Cardiac septum (tissue), 1 donor: ENCODE measurements at regions of chr16 and their contacts with region 1.

Region 1: DNA sequence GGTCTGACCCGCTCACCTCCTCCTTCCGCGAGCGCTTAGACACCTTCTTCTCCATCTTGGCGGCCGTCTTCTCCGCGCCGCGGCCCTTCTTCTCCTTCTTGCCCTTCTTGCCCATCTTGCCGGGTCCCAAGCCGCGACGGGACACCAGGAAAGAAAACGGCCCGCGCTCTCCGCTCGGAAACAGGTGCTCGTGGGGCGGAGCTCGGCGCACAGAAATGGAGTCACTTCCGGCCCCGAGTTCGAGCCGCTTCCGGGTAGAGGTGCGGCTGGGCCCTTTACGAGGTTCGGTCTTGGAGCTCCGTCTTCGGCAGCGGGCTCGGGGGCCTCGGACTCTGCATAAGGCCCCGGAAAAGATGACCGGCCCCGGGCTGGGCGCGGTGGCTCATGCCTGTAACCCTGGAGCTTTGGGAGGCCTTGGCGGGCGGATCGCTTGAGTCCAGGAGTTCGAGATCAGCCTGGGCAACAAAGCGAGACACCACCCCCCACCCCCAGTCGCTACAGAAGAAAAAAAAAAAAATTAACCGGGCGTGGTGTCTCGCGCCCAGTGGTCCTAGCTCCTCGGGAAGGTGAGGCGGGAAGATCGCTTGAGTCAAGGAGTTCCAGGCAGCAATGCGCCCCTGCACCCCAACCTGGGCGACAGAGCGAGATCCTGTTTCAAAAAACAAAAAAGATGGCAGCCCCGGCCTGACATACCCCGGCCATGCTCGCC is at the start of gene KLHDC4:
- DNase-seq: peak; percentile 95
- total RNA-seq, gene KLHDC4: 12.6 TPM

Region 2: DNA sequence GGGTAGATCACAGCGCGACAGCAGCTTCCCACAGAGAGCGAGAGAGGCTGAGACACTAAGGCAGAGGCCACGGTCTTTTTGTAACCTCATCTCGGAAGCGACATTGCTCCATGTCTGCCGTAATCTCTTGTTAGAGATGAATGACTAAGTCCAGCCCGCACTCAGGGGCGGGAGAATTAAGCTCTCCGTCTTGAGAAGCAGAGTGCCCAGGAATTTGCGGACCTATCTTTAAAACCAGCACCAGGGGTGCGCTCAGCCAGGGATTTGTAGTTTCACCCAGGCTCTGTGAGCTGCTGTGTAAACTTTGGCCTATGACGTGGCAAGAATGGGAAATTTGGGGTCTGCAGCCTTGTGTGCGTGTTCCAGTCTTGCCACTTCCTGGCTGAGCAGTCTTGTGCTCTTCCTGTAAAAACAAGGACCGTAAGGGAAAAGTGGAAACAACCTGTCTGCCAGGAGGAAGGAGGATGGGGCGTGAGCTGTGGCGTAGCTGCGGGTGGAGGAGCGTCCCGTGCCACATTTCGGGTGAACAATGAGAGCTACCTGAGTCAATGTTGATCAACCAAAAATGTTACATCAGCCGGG is 179.6 kb before region 1 on chr16:
- intact Hi-C with region 1: loop called (anchors 1 kb)
- DNase-seq: no peak

Region 3: GRCh38 chr16:88569985-88570690 is 804.2 kb after region 1 on chr16 and contains the start of gene ZC3H18:
- intact Hi-C with region 1: loop called (anchors 10 kb)
- DNase-seq: peak; percentile 98
- total RNA-seq, gene ZC3H18: 20.6 TPM